GM12878 (cell line): ENCODE measurements at regions of chr1 and their contacts with region 1.

Region 1: GRCh38 chr1:904310-904950 is 19.3 kb upstream of the SAMD11 start:
- DNase-seq: no peak
- ATAC-seq: peak; percentile 90
- H3K4me3 ChIP-seq: peak overlapping the region; percentile 24; the same call in 1 of the 2 replicates
- H3K27ac ChIP-seq: no peak overlapping the region
- H3K4me1 ChIP-seq: peaks cover 7% of the 10 kb centered on the region
- H3K27me3 ChIP-seq: no peaks in the 10 kb centered on the region; a peak in 1 of 4 replicates
- CTCF ChIP-seq: peak; percentile 66 to 95 (median 72); a peak in 5 of 6 replicates
- EP300 ChIP-seq: no peak
- POLR2A ChIP-seq: peak; percentile 58
- RAD21 ChIP-seq: peak; percentile 76

Region 2: DNA sequence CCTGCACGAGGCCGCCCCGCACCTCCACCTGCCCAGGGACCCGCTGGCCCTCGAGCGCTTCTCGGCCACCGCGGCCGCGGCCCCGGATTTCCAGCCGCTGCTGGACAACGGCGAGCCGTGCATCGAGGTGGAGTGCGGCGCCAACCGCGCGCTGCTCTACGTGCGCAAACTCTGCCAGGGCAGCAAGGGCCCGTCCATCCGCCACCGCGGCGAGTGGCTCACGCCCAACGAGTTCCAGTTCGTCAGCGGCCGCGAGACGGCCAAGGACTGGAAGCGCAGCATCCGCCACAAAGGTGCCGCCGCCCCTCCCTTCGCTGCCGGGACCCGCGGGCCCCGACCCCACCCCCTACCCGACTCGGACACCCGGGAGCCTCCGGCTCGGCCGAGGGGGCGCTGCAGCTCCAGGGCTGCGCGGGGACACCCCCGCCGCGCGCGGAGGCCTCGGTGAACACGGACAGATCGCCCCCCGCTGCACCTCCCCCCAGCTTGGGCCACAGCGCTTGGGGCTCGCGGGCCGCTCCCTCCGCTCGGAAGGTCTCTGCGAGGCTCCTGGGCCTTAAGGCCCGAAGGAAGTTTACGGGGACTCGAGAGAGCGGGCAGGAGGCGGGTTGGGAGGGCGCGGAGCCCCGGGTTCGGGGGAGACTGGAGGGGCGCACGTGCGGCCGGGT is 20.4 kb after region 1 on chr1:
- CTCF ChIA-PET with region 1: interaction called, 6 read pairs
- POLR2A ChIA-PET with region 1: no interaction called
- RAD21 ChIA-PET with region 1: no interaction called
- SMC1A ChIA-PET with region 1: no interaction called
- in situ Hi-C with region 1: no loop called
- intact Hi-C with region 1: loop called (anchors 1 kb)
- DNase-seq: no peak
- ATAC-seq: no peak
- H3K4me3 ChIP-seq: no peak overlapping the region
- H3K27ac ChIP-seq: no peak overlapping the region
- H3K4me1 ChIP-seq: no peaks in the 10 kb centered on the region
- H3K27me3 ChIP-seq: peaks cover 19 to 24% of the 10 kb centered on the region in 2 experiments
- CTCF ChIP-seq: no peak
- EP300 ChIP-seq: no peak
- POLR2A ChIP-seq: no peak
- RAD21 ChIP-seq: no peak

Region 3: DNA sequence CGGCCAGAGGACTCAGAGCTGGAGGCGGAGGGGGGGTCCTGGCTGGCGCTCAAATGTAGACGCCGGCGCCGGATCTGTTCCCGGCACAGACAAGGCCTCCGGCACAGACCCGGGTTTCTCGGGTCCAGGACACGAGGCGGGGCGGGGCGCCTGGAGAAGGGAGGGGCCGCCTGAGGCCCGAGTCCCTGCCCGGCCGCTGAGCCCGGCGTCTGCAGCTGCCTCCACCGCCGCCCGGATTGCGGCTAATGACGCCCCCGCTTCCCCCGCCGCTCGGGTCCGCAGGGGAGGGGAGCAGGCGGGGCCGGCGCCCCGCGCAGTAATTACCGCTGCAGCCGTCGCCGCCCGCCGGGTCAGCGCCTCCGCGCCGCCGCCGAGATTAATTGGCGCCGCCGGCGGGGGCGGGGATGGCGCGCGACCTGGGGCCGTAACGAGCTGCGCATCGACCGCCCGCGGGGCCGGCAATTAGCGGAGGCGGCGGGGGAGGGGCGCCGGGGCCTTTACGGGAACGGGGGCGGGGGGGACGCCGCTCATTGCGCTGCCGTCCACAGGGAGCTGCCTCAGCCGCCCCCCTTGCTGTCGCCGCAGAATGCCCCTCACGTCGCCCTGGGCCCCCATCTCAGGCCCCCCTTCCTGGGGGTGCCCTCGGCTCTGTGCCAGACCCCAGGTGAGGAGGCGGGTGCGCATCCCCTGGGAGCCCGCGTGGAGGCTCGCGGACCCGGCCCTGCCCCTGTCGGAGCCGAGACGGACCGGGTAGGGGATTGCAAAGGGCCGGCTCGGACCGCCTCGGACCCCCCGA is 37.4 kb after region 1 on chr1:
- CTCF ChIA-PET with region 1: interaction called, 16 read pairs
- POLR2A ChIA-PET with region 1: interaction called, 4 read pairs
- RAD21 ChIA-PET with region 1: interaction called, 20 read pairs
- SMC1A ChIA-PET with region 1: interaction called, 3 read pairs
- in situ Hi-C with region 1: no loop called
- intact Hi-C with region 1: loop called (anchors 5 kb)
- DNase-seq: no peak
- ATAC-seq: peak; percentile 50
- H3K4me3 ChIP-seq: no peak overlapping the region
- H3K27ac ChIP-seq: no peak overlapping the region
- H3K4me1 ChIP-seq: peaks cover 7% of the 10 kb centered on the region; the same call in 1 of the 2 replicates
- H3K27me3 ChIP-seq: peaks cover 6 to 8% of the 10 kb centered on the region in 2 experiments
- CTCF ChIP-seq: no peak
- EP300 ChIP-seq: no peak
- POLR2A ChIP-seq: peak; percentile 42; the same call in 1 of the 2 replicates
- RAD21 ChIP-seq: no peak